HCT116 (cell line): ENCODE measurements at regions of chr3 and their contacts with region 1.

Region 1: DNA sequence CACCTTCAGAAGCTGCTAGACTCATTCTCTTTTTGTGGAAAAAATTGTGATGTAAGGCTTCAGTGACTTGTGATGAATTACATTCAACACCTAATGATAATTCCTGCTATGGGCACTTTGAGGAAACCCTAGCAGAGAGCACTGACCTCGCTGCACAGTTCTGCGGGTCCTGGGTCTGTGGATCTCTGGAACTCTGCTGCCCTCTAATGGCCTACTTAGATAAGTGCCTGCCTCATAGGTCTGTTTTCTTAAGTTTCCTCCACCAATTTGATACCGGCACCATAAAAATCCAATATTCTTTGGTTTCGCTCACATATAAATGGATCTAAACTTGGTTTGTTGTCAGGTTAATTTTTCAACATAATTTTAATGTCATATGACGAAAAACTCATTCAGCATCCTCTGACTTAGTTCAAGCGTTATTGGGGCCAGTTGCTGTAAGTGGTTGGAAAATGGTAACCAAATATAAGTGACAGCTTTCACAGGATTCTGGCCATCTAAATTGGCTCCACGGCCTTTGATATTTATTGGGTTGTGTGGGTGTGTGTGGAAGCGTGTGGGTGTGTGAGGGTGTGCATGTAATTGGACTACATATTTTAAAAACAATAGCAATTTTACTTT is 10.4 kb downstream of the SLITRK3 start:
- DNase-seq: peak; percentile 67
- ATAC-seq: peak; percentile 100
- H3K4me3 ChIP-seq: no peak overlapping the region
- H3K27ac ChIP-seq: no peak overlapping the region
- H3K4me1 ChIP-seq: no peaks in the 10 kb centered on the region
- H3K27me3 ChIP-seq: no peaks in the 10 kb centered on the region
- CTCF ChIP-seq: peak; percentile 64 to 94 (median 73); a peak in 5 of 6 replicates
- POLR2A ChIP-seq: no peak
- RAD21 ChIP-seq: peak; percentile 91

Region 2: GRCh38 chr3:163476183-163476582 is 1709.6 kb before region 1 on chr3:
- CTCF ChIA-PET with region 1: no interaction called
- POLR2A ChIA-PET with region 1: no interaction called
- RAD21 ChIA-PET with region 1: no interaction called
- intact Hi-C with region 1: loop called (anchors 5 kb)
- DNase-seq: peak; percentile 24
- ATAC-seq: no peak; the same call in 1 of the 2 replicates
- H3K4me3 ChIP-seq: no peak overlapping the region
- H3K27ac ChIP-seq: no peak overlapping the region
- H3K4me1 ChIP-seq: no peaks in the 10 kb centered on the region
- H3K27me3 ChIP-seq: no peaks in the 10 kb centered on the region
- CTCF ChIP-seq: peak; percentile 24 to 54 (median 36); a peak in 4 of 6 replicates
- POLR2A ChIP-seq: no peak
- RAD21 ChIP-seq: peak; percentile 47

Region 3: DNA sequence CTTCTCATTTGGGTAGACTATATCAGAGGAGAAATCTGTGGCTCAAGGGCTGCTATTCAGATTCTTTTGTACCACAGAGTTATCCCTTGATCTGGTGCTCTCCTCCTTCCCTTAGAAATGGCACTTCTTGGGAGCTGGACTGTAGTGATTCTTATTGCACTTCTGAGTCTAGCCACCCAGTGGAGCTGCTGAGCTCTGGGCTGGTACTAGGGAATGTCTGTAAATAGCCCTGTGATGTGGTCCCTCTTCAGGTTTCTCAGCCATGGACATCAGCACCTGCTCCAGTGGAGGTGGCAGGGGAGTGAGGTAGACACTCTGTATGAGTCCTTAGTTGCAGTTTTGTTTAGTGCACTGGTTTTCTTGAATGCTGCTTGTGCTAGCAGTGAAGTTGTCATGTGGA is 1400.1 kb before region 1 on chr3:
- CTCF ChIA-PET with region 1: no interaction called
- POLR2A ChIA-PET with region 1: no interaction called
- RAD21 ChIA-PET with region 1: no interaction called
- intact Hi-C with region 1: loop called (anchors 5 kb)
- DNase-seq: peak; percentile 22
- ATAC-seq: peak; percentile 96
- H3K4me3 ChIP-seq: no peak overlapping the region
- H3K27ac ChIP-seq: no peak overlapping the region
- H3K4me1 ChIP-seq: no peaks in the 10 kb centered on the region
- H3K27me3 ChIP-seq: no peaks in the 10 kb centered on the region
- CTCF ChIP-seq: peak; percentile 24 to 75 (median 72); a peak in 5 of 6 replicates
- POLR2A ChIP-seq: no peak
- RAD21 ChIP-seq: peak; percentile 48

Region 4: DNA sequence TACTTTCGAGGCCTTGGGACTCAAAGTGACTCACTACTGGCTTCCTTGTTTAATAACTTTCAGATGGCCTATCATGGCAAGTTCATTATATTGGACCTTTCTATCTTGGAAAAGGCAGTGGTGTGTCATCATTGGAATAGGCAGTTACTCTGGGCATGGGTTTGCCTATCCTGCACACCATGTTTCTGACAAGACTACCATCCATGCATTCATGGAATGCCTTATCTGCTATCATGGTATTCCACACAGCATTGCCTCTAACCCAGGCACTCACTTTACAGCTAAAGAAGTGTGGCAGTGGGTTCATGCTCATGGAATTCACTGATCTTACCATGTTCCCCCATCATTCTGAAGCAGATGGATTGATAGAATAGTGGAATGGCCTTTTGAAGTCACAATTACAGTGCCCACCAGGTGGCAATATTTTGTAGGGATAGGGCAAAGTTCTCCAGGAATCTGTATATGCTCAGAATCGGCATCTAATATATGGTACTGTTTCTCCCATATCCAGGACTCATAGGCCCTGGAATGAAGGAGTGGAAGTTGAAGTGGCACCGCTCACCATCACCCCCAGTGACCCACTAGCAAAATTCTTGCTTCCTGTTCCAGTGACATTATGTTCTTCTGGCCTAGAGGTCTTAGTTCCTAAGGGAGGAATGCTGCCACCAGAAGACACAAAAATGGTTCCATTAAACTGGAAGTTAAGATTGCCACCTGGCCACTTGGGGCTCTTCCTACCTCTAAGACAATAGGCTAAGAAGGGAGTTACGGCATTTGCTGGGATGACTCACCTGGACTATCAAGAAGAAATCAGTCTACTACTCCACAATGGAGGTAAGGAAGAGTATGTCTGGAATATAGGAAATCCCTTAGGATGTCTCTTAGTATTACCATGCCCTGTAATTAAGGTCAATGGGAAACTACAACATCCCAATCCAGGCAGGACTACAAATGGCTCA is 1268.9 kb before region 1 on chr3:
- CTCF ChIA-PET with region 1: no interaction called
- POLR2A ChIA-PET with region 1: no interaction called
- RAD21 ChIA-PET with region 1: no interaction called
- intact Hi-C with region 1: loop called (anchors 1 kb)
- DNase-seq: peak; percentile 26
- ATAC-seq: peak; percentile 78
- H3K4me3 ChIP-seq: no peak overlapping the region
- H3K27ac ChIP-seq: no peak overlapping the region
- H3K4me1 ChIP-seq: no peaks in the 10 kb centered on the region
- H3K27me3 ChIP-seq: no peaks in the 10 kb centered on the region
- CTCF ChIP-seq: peak; percentile 22 to 61 (median 51); a peak in 5 of 6 replicates
- POLR2A ChIP-seq: no peak
- RAD21 ChIP-seq: peak; percentile 62

Region 5: DNA sequence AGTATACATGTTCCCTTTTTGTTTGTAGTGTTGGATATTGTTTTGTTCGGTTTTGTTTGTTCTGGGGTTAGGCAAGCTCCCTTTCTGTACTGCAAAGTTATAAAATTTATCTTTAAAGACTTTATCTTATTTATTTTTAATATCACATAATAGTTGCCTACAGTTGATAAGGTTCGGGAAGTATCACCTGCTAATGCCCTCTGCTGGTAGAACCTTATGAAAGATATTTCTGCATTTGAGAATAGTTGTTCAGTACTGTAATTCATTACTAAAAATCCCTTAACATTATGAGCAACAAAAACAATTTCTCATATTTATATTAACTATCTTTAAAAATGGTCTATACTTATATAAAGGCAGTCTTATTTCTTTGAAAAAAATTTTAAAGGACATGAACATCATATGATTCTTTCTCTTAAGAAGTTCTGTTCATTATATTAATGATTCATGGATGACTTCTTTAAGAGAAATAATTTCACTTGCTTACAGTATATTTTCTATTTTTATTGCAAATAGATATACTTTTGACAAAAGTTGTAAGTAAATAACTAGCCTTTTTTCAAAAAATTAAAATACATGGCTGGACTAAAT is 1234.3 kb before region 1 on chr3:
- CTCF ChIA-PET with region 1: interaction called, 3 read pairs
- POLR2A ChIA-PET with region 1: no interaction called
- RAD21 ChIA-PET with region 1: no interaction called
- intact Hi-C with region 1: loop called (anchors 10 kb)
- DNase-seq: no peak
- ATAC-seq: peak; percentile 57; the same call in 1 of the 2 replicates
- H3K4me3 ChIP-seq: no peak overlapping the region
- H3K27ac ChIP-seq: no peak overlapping the region
- H3K4me1 ChIP-seq: no peaks in the 10 kb centered on the region
- H3K27me3 ChIP-seq: no peaks in the 10 kb centered on the region
- CTCF ChIP-seq: peak in 2 of 3 experiments; percentile 53 to 55; a peak in 4 of 6 replicates
- POLR2A ChIP-seq: no peak
- RAD21 ChIP-seq: peak; percentile 49

Region 6: GRCh38 chr3:164208821-164209220 is 977.0 kb before region 1 on chr3:
- CTCF ChIA-PET with region 1: no interaction called
- POLR2A ChIA-PET with region 1: no interaction called
- RAD21 ChIA-PET with region 1: no interaction called
- intact Hi-C with region 1: loop called (anchors 10 kb)
- DNase-seq: no peak
- ATAC-seq: no peak; the same call in 1 of the 2 replicates
- H3K4me3 ChIP-seq: no peak overlapping the region
- H3K27ac ChIP-seq: no peak overlapping the region
- H3K4me1 ChIP-seq: no peaks in the 10 kb centered on the region
- H3K27me3 ChIP-seq: no peaks in the 10 kb centered on the region
- CTCF ChIP-seq: no peak
- POLR2A ChIP-seq: no peak
- RAD21 ChIP-seq: no peak

Region 7: GRCh38 chr3:164375995-164376394 is 809.8 kb before region 1 on chr3:
- CTCF ChIA-PET with region 1: no interaction called
- POLR2A ChIA-PET with region 1: no interaction called
- RAD21 ChIA-PET with region 1: no interaction called
- intact Hi-C with region 1: loop called (anchors 2 kb)
- DNase-seq: no peak
- ATAC-seq: no peak
- H3K4me3 ChIP-seq: no peak overlapping the region
- H3K27ac ChIP-seq: no peak overlapping the region
- H3K4me1 ChIP-seq: no peaks in the 10 kb centered on the region
- H3K27me3 ChIP-seq: no peaks in the 10 kb centered on the region
- CTCF ChIP-seq: 0 out of 6 replicates have a peak, but pooled peaks of 1 of the 3 experiments have one; percentile 7
- POLR2A ChIP-seq: no peak
- RAD21 ChIP-seq: peak; percentile 49

Region 8: DNA sequence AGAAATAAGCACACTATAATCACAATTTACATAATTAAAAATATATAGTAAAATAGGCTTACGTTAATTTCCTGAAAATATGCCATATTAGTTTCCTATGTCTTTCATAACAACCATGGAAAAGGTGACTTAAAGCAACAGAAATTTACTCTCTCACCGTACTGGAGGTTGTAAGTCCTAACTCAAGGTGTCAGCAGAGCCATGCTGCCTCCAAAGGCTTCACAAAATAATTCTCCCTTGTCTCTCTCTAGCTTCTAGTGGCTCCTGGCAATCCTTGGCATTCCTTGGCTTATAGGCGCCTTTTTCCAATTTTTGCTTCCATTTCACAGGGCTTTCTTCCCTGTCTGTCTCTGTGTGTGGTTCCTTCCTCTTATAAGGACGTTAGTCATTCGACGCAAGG is 115.1 kb before region 1 on chr3:
- CTCF ChIA-PET with region 1: no interaction called
- POLR2A ChIA-PET with region 1: no interaction called
- RAD21 ChIA-PET with region 1: no interaction called
- intact Hi-C with region 1: no loop called
- DNase-seq: no peak
- ATAC-seq: no peak
- H3K4me3 ChIP-seq: no peak overlapping the region
- H3K27ac ChIP-seq: no peak overlapping the region
- H3K4me1 ChIP-seq: no peaks in the 10 kb centered on the region
- H3K27me3 ChIP-seq: no peaks in the 10 kb centered on the region
- CTCF ChIP-seq: no peak
- POLR2A ChIP-seq: no peak
- RAD21 ChIP-seq: no peak

Region 9: DNA sequence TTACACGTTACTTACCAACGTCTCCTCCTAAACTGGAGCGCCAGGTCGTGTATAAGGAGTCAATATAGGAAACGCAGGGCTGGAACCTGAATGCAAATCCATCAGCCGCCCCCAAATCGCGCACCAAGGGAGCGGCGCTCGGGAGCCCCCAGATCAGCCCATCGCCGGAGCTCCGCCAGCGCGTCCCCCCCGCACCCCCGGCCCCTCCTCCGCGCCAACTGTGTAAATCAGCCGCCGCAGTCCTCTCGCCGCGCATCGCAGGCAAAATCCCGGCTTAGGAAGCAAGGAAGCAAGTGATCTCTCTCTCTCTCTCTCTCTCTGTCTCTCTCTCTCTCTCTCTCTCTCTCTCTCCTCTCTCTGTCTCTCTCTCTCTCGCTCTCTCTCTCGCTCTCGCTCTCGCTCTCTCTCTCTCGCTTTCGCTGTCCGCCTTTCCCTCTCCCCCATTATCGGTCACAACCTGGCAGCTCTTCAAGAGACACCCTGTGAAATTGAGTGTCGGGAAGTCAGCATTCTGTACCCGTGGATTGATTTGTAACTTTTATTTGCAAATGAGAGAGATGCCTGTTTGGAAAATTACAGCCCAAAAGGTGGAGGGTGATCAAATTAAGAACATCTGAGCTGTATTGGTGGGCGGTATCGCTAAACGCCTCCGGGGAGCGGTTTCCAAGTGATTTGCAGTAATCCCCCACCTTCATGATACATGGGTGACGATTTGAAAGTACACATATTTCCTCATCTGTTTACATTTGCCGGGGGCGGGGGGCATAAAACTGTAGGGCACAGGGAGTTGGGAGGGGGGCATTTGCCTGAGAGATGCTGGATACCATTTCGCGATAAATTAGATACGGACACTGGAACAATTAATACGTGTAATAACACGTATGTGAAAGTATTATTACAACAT is 11.0 kb after region 1 on chr3:
- CTCF ChIA-PET with region 1: no interaction called
- POLR2A ChIA-PET with region 1: no interaction called
- RAD21 ChIA-PET with region 1: no interaction called
- intact Hi-C with region 1: no loop called
- DNase-seq: no peak
- ATAC-seq: no peak
- H3K4me3 ChIP-seq: no peak overlapping the region
- H3K27ac ChIP-seq: no peak overlapping the region
- H3K4me1 ChIP-seq: no peaks in the 10 kb centered on the region
- H3K27me3 ChIP-seq: no peaks in the 10 kb centered on the region
- CTCF ChIP-seq: no peak
- POLR2A ChIP-seq: no peak
- RAD21 ChIP-seq: no peak

Region 10: GRCh38 chr3:165753560-165753959 is 567.7 kb after region 1 on chr3:
- CTCF ChIA-PET with region 1: no interaction called
- POLR2A ChIA-PET with region 1: no interaction called
- RAD21 ChIA-PET with region 1: no interaction called
- intact Hi-C with region 1: no loop called
- DNase-seq: no peak
- ATAC-seq: no peak
- H3K4me3 ChIP-seq: no peak overlapping the region
- H3K27ac ChIP-seq: no peak overlapping the region
- H3K4me1 ChIP-seq: no peaks in the 10 kb centered on the region
- H3K27me3 ChIP-seq: no peaks in the 10 kb centered on the region
- CTCF ChIP-seq: no peak
- POLR2A ChIP-seq: no peak
- RAD21 ChIP-seq: no peak